Activated CD4-positive, alpha-beta T cell treated with anti-CD3 and anti-CD28 coated beads for 36 hours (primary cell): ENCODE measurements at regions of chr20 and their contacts with region 1.

Region 1: DNA sequence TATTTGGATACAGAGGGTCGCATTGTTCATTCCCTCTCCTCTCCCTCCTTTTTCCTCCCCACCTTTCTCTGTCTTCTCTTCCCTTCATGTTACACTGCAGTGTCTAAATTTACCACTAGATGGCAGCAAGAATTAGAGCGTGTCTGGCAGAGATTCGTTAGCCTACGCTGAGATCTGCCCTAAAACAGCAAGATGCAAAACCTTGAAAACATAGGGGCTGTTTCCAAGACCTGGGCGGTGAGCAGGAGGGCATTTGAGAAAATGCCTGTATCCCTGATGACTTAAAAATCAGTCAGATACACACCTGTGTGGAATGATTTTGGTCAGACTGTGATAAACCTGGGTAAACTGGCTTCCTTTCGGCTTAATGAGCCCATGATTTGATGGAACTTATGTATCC is 101.5 kb upstream of the ISM1 start:
- DNase-seq: peak; percentile 30
- ATAC-seq: peak; percentile 71
- H3K4me3 Mint-ChIP-seq: no peak overlapping the region
- H3K27ac Mint-ChIP-seq: no peak overlapping the region
- H3K4me1 Mint-ChIP-seq: no peaks in the 10 kb centered on the region
- H3K27me3 Mint-ChIP-seq: no peaks in the 10 kb centered on the region

Region 2: GRCh38 chr20:12949429-12949980 is 170.1 kb before region 1 on chr20:
- CTCF ChIA-PET with region 1: no interaction called
- POLR2A ChIA-PET with region 1: no interaction called
- intact Hi-C with region 1: no loop called
- DNase-seq: no peak
- ATAC-seq: no peak
- H3K4me3 Mint-ChIP-seq: no peak overlapping the region
- H3K27ac Mint-ChIP-seq: no peak overlapping the region
- H3K4me1 Mint-ChIP-seq: no peaks in the 10 kb centered on the region
- H3K27me3 Mint-ChIP-seq: no peaks in the 10 kb centered on the region

Region 3: DNA sequence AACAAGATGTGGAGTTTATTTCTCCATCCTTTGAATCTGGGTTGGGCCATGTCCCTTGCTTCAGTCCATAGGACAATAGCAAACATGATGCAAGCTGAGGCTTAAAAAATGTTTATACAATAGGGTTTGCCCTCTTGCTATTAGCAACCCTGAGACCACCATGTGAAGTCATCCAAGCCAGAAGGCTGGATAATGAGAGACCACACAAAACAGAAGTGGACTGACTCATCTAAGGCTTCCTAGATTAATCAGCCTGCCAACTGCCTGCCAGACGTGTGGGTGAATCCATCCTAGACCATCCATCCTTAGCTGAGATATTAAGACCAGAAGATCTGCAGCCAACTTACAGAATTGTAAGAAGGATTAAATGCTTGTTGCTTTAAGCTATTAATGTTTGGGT is 63.4 kb after region 1 on chr20:
- CTCF ChIA-PET with region 1: no interaction called
- POLR2A ChIA-PET with region 1: no interaction called
- intact Hi-C with region 1: no loop called
- DNase-seq: peak; percentile 30
- ATAC-seq: peak; percentile 78
- H3K4me3 Mint-ChIP-seq: no peak overlapping the region
- H3K27ac Mint-ChIP-seq: no peak overlapping the region
- H3K4me1 Mint-ChIP-seq: no peaks in the 10 kb centered on the region
- H3K27me3 Mint-ChIP-seq: no peaks in the 10 kb centered on the region

Region 4: DNA sequence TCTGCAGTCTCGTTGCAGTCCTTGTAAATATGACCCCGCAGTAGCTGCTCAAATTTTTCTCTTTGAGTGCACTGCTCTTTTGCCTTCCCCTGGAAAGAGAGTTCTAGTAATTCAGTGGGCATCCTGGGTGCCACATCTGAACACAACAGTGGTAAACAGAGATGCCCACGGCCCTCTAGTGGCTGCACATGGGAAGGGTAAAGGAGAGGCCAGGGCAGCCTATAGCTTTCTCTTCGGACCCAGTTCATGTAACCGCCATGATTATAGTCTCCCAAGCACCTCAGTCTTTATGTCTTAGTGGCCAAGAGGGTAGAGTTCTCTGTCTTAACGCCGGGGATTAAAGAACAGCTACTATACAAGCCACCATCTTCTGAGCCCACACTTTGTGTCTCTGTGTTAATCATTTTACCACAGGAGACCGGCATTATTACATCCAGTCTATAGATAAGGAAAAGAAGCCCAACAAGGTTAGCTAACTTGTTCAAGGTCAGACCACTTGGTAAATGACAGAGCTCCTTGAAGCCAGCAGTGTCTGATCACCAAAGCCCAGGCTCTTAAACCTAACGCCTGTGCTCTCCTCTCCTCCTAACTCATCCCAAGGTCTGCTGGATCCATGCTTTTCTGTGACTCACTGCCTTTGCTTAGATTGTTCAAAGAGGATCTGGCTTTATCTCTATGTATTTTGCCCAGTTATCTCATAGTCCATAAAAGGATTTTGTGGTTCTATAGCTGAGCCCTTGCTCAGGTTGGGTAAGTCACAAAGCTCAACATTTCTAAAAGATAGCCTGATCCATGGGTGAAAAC is 183.3 kb after region 1 on chr20:
- CTCF ChIA-PET with region 1: interaction called, 44 read pairs
- POLR2A ChIA-PET with region 1: no interaction called
- intact Hi-C with region 1: loop called (anchors 1 kb)
- DNase-seq: peak; percentile 73
- ATAC-seq: peak; percentile 93
- H3K4me3 Mint-ChIP-seq: no peak overlapping the region
- H3K27ac Mint-ChIP-seq: no peak overlapping the region
- H3K4me1 Mint-ChIP-seq: no peaks in the 10 kb centered on the region
- H3K27me3 Mint-ChIP-seq: no peaks in the 10 kb centered on the region

Region 5: DNA sequence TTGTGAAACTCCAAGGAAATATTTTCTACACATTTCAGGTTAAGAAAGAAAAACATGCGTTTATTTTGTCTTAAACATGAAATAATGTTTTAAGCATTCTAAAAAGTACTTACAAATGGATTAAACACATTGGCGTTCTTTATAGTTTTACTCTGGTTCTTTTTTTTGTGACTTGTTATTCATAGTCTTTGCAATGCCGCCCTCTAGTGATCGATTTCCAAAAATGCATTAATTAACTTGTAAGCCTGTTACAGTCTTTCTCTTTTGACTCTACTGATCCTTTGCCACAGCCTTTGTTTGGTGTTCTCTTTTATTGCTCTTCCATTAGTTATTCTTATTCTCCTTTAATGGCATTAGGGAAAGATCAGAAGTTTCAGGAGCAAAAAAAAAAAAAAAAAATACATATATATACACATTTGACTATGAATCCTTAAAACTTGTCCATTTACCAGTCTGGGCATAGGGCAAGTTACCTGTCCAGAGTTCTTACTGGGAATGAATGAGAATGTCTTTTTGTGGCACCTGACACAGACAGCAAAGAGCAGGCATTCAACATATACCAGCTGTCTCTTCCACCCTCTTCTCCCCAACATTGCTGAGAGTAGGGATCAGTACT is 935.7 kb after region 1 on chr20:
- CTCF ChIA-PET with region 1: no interaction called
- POLR2A ChIA-PET with region 1: no interaction called
- intact Hi-C with region 1: loop called in 1 of 2 experiments (anchors 1 kb)
- DNase-seq: peak; percentile 9
- ATAC-seq: no peak
- H3K4me3 Mint-ChIP-seq: no peak overlapping the region
- H3K27ac Mint-ChIP-seq: no peak overlapping the region
- H3K4me1 Mint-ChIP-seq: no peaks in the 10 kb centered on the region
- H3K27me3 Mint-ChIP-seq: peaks cover 2% of the 10 kb centered on the region